Stomach (tissue), 19 donors: ENCODE measurements at regions of chr10 and their contacts with region 1.

Region 1: DNA sequence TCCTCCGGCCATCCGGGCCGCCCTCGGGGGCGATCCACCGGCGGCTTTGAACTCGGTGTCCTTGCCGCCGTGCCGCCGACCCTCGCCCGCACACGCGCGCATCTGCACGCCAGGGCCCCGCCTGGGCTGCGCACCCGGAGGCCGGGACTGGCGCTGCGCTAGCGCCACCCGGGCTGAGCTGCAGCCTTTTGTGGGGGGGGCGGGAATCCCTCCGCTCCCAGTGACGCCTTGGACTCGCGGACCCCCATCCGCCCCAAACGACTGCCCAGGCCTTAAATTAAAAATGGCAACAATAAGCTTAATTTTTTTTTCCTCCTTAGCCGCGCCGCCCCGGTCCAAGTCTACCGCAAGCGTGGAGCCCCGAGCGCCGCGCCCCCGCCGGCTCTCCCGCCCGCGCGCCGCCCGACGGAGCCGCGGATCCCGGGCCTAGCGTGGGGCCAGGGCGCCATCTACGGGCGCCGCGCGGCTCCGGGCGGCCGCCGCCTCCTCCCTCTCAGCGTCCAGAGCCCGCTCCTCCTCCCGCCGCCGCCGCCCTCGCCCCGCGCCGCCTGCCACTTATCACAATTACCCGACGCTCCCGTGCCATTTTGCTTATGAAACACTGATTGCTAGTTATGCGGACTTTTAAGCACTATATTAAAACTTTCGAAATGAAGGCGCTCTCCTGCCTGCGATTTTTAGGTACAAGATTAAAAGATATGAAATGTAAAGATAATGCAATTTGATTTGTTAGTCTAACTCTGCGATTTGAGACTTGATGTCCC is 7.5 kb upstream of the EBF3 start:
- DNase-seq: peak; percentile 59 to 91
- H3K4me3 ChIP-seq: peak overlapping the region; percentile 32 to 49 (median 37)
- H3K27ac ChIP-seq: no peak overlapping the region
- H3K4me1 ChIP-seq: peaks cover 23 to 64% (median 49%) of the 10 kb centered on the region in 4 donors
- H3K27me3 ChIP-seq: peaks cover 50 to 100% (median 77%) of the 10 kb centered on the region in 3 donors
- CTCF ChIP-seq: peak in 3 of 7 experiments; percentile 20 to 61 (median 35)
- EP300 ChIP-seq: no peak
- POLR2A ChIP-seq: no peak

Region 2: DNA sequence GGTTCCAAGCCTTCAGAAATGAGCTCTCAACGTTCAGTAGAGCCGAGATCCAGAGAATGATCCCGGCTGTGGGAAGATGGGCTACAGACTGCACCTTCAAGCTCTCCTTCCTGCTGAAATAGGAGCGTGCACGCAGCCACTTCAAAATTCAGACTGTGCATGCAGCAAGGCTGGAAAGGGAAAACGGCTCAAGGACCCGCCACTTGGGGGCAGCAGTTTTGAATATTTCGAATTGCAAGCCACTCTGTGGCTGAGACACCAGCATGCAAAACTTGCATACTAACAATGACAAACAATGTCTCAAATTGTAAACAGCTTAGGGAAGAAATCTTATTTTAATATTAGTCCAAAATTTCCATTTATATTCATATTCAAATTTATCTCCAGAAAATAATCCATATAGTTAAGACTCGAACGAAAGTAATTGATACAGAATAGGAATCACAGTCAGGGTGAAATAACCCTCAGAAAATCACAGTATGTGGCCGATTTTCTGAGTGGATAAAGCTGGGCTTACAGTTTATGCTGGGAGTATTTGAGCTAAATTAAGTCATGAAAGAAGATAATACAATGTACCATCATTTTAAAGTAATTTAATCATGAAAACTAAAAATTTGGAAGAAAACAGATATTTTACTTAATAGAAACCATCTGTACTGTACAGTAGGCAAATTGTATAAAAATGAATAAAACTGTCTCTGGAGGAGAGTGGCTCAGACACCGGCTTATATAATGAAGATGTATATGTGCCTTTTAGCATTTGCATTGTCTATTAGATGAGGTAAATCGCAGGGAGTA is 1707.5 kb before region 1 on chr10:
- intact Hi-C with region 1: loop called (anchors 10 kb)
- DNase-seq: peak; percentile 54 to 84
- H3K4me3 ChIP-seq: no peak overlapping the region
- H3K27ac ChIP-seq: no peak overlapping the region
- H3K4me1 ChIP-seq: no peaks in the 10 kb centered on the region
- H3K27me3 ChIP-seq: peaks cover 0 to 70% (median 40%) of the 10 kb centered on the region in 3 donors
- CTCF ChIP-seq: peak in 4 of 7 experiments; percentile 11 to 65 (median 36)
- EP300 ChIP-seq: no peak
- POLR2A ChIP-seq: no peak

Region 3: GRCh38 chr10:129030996-129031843 is 940.3 kb before region 1 on chr10:
- intact Hi-C with region 1: loop called (anchors 5 kb)
- DNase-seq: peak; percentile 45 to 87
- H3K4me3 ChIP-seq: no peak overlapping the region
- H3K27ac ChIP-seq: no peak overlapping the region
- H3K4me1 ChIP-seq: peaks cover 0 to 27% (median 7%) of the 10 kb centered on the region in 4 donors
- H3K27me3 ChIP-seq: peaks cover 0 to 83% (median 36%) of the 10 kb centered on the region in 3 donors
- CTCF ChIP-seq: peak in 5 of 7 experiments; percentile 64 to 73 (median 69)
- EP300 ChIP-seq: no peak
- POLR2A ChIP-seq: no peak

Region 4: GRCh38 chr10:129501652-129502436 is 469.7 kb before region 1 on chr10:
- intact Hi-C with region 1: no loop called
- DNase-seq: peak; percentile 46 to 47
- H3K4me3 ChIP-seq: no peak overlapping the region
- H3K27ac ChIP-seq: no peak overlapping the region
- H3K4me1 ChIP-seq: peaks cover 5 to 19% (median 11%) of the 10 kb centered on the region in 4 donors
- H3K27me3 ChIP-seq: no peaks in the 10 kb centered on the region
- CTCF ChIP-seq: no peak
- EP300 ChIP-seq: no peak
- POLR2A ChIP-seq: no peak

Region 5: GRCh38 chr10:129815898-129816655 is 155.5 kb before region 1 on chr10:
- intact Hi-C with region 1: no loop called
- DNase-seq: no peak
- H3K4me3 ChIP-seq: no peak overlapping the region
- H3K27ac ChIP-seq: no peak overlapping the region
- H3K4me1 ChIP-seq: no peaks in the 10 kb centered on the region
- H3K27me3 ChIP-seq: peaks cover 0 to 8% (median 0%) of the 10 kb centered on the region in 3 donors
- CTCF ChIP-seq: no peak
- EP300 ChIP-seq: no peak
- POLR2A ChIP-seq: no peak